K562 (cell line): ENCODE measurements at regions of chr14 and their contacts with region 1.

Region 1: DNA sequence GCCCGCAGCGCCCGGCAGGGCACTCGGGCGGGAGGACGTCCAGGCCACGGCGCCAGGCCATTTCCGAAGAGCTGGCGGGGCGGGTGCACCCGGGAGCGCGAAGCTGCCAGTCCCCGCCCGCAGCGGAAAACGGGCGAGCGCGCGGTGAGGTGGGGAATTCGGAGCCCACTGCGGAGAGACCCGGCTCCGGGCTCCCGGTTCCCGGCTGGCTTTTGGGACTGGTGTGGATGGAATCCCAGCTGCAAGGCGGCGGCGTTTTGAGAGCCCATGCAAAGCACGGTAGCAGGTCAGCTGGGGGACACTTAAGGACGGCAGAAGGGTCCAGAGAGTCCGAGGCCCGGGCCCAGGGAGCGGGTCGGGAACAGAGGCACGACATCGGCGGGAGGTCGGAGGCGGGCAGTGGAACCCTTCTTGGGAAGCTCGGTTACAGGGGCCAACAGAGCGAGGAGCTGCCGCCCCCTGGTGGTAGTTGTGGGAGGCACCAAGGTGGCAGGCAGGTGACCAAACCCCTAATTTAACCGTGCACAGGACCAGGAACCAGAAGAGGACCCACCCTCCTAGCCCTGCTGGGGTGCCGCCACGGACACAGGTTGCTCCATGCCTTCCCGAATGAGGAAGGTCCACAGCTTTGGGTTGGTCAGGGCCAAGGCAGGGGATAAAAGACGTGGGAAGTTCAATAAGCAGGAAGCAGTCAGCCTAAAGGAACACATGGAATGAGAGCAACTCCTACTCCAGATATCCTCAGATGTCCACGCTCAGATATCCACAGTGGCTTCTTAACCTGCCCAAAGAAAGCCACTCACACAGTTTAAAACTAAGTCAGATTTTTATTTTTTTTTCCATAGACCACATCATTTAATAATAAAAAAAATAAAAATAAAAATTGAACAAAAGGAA is 685 bp upstream of the CDH24 start:
- DNase-seq: peak; percentile 78 to 94 (median 84)
- ATAC-seq: peak; percentile 83
- H3K4me3 ChIP-seq: peak overlapping the region; percentile 69
- H3K27ac ChIP-seq: peak overlapping the region; percentile 64
- H3K4me1 ChIP-seq: peaks cover 11 to 45% of the 10 kb centered on the region in 2 experiments
- H3K27me3 ChIP-seq: no peaks in the 10 kb centered on the region
- CTCF ChIP-seq: peak; percentile 92 to 96 (median 94)
- EP300 ChIP-seq: no peak
- POLR2A ChIP-seq: peak; percentile 67
- RAD21 ChIP-seq: peak; percentile 85 to 89

Region 2: DNA sequence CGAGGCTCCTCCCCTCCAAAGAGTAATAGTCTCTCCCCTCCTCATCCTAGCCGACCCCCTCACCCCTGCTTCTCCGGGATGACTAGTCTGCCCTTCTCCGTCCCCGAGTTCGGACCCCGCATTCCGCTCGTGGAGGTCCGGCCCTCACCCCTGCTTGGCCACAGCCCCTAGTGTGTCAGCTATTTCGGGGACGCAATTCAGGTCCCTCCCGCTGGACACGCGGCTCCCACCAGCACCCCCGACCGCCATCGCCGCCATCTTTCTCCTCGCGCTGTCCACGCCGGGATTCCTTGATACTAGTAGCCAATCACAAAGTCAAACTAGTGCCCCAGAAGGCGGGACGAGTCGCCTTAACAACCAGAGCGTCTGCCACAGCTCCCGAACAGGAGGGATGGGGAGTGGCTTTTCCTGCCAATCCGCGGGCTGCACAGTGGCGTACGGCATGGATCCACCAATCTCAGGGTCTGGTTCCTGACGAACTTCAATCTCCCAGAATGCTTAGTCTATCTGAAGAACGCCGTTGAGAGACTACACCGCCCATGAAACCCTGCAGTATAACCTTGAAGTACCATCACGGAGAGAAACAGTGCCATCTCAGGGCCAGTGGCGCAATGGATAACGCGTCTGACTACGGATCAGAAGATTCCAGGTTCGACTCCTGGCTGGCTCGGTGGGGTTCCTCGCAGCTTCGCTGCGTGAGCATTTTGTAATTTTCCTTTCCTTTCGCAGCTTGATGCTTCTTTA is 128.7 kb before region 1 on chr14 and contains the start of gene PRMT5:
- CTCF ChIA-PET with region 1: interaction called, 6 read pairs
- POLR2A ChIA-PET with region 1: interaction called, 6 read pairs
- in situ Hi-C with region 1: no loop called
- intact Hi-C with region 1: loop called (anchors 1 kb)
- DNase-seq: peak; percentile 94 to 99 (median 96)
- ATAC-seq: peak; percentile 96
- H3K4me3 ChIP-seq: peak within 1 kb of the TSS; percentile 80
- H3K27ac ChIP-seq: peak within 1 kb of the TSS; percentile 88
- H3K4me1 ChIP-seq: peaks cover 5 to 14% of the 10 kb centered on the region in 2 experiments; a peak in 3 of 5 replicates
- H3K27me3 ChIP-seq: no peaks in the 10 kb centered on the region
- CTCF ChIP-seq: peak in 1 of 3 experiments; percentile 26; a peak in 2 of 6 replicates
- EP300 ChIP-seq: peak; percentile 77
- POLR2A ChIP-seq: peak; percentile 99
- RAD21 ChIP-seq: no peak
- polyA plus RNA-seq, gene PRMT5: 114 to 155 TPM

Region 3: GRCh38 chr14:22973217-22974032 is 84.6 kb before region 1 on chr14:
- CTCF ChIA-PET with region 1: interaction called, 27 read pairs
- POLR2A ChIA-PET with region 1: interaction called, 5 read pairs
- in situ Hi-C with region 1: loop called (anchors 5 kb)
- intact Hi-C with region 1: loop called (anchors 1 kb)
- DNase-seq: peak; percentile 43 to 75 (median 54)
- ATAC-seq: peak; percentile 77
- H3K4me3 ChIP-seq: no peak overlapping the region
- H3K27ac ChIP-seq: no peak overlapping the region
- H3K4me1 ChIP-seq: peaks cover 19 to 21% of the 10 kb centered on the region in 2 experiments
- H3K27me3 ChIP-seq: no peaks in the 10 kb centered on the region
- CTCF ChIP-seq: peak; percentile 81 to 83 (median 81)
- EP300 ChIP-seq: no peak
- POLR2A ChIP-seq: no peak
- RAD21 ChIP-seq: peak; percentile 69 to 88

Region 4: GRCh38 chr14:22994762-22995275 is 63.2 kb before region 1 on chr14:
- CTCF ChIA-PET with region 1: interaction called, 141 read pairs
- POLR2A ChIA-PET with region 1: interaction called, 9 read pairs
- in situ Hi-C with region 1: no loop called
- intact Hi-C with region 1: loop called (anchors 1 kb)
- DNase-seq: peak; percentile 32 to 74 (median 54)
- ATAC-seq: peak; percentile 94
- H3K4me3 ChIP-seq: no peak overlapping the region
- H3K27ac ChIP-seq: no peak overlapping the region
- H3K4me1 ChIP-seq: peaks cover 7 to 15% of the 10 kb centered on the region in 2 experiments; a peak in 4 of 5 replicates
- H3K27me3 ChIP-seq: no peaks in the 10 kb centered on the region
- CTCF ChIP-seq: peak; percentile 72 to 87 (median 84)
- EP300 ChIP-seq: no peak
- POLR2A ChIP-seq: no peak
- RAD21 ChIP-seq: peak; percentile 73 to 89

Region 5: DNA sequence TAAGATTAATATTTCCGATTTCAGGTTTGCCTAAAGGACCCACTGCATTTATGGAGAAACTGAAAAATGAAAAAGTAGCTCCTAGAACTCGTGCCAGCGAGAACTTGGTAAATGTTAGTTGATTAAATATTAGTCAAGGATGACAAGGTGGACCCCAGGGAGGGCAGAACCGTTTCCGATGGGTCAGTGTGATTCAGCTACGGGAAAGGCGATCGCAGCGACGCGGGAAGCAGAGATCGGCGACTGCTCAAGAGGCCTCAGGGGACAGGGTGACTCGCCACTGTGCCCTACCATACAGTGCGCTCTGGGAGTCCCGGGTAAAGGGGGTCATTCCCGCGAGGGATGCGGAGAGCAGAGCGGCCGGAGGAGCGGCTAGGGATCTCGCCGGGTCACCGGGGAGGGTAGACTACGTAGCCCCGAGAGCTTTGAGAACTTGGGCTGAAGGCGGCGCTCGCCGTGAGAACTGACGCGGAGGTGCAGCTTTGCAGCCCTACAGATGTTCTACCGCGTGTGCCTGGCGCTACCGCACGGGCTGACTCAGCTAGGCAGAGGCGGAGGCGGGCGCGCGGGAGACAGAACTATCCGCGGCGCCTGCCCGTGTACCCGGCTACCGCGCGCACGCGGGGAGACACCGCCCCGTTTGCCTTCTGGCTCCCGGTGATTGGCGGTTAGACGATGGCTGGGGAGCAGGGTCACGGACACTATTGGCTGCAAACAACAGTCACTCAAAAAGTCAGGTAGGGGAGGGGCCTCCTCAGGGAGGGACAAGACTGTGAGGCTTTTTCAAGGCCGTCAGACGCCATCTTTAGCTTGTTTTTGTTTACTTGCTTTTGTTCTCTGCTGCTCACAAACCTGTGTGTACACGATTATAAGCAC is 51.2 kb before region 1 on chr14:
- CTCF ChIA-PET with region 1: interaction called, 3 read pairs
- POLR2A ChIA-PET with region 1: interaction called, 18 read pairs
- in situ Hi-C with region 1: no loop called
- intact Hi-C with region 1: no loop called
- DNase-seq: peak; percentile 97 to 99 (median 99)
- ATAC-seq: peak; percentile 94
- H3K4me3 ChIP-seq: peak overlapping the region; percentile 43
- H3K27ac ChIP-seq: peak overlapping the region; percentile 97
- H3K4me1 ChIP-seq: peaks cover 20 to 34% of the 10 kb centered on the region in 2 experiments
- H3K27me3 ChIP-seq: no peaks in the 10 kb centered on the region
- CTCF ChIP-seq: peak; percentile 38 to 49 (median 45); a peak in 5 of 6 replicates
- EP300 ChIP-seq: 0 out of 2 replicates have a peak, but pooled peaks have one; percentile 4
- POLR2A ChIP-seq: peak; percentile 93
- RAD21 ChIP-seq: peak in 1 of 2 experiments; percentile 35; a peak in 2 of 4 replicates

Region 6: DNA sequence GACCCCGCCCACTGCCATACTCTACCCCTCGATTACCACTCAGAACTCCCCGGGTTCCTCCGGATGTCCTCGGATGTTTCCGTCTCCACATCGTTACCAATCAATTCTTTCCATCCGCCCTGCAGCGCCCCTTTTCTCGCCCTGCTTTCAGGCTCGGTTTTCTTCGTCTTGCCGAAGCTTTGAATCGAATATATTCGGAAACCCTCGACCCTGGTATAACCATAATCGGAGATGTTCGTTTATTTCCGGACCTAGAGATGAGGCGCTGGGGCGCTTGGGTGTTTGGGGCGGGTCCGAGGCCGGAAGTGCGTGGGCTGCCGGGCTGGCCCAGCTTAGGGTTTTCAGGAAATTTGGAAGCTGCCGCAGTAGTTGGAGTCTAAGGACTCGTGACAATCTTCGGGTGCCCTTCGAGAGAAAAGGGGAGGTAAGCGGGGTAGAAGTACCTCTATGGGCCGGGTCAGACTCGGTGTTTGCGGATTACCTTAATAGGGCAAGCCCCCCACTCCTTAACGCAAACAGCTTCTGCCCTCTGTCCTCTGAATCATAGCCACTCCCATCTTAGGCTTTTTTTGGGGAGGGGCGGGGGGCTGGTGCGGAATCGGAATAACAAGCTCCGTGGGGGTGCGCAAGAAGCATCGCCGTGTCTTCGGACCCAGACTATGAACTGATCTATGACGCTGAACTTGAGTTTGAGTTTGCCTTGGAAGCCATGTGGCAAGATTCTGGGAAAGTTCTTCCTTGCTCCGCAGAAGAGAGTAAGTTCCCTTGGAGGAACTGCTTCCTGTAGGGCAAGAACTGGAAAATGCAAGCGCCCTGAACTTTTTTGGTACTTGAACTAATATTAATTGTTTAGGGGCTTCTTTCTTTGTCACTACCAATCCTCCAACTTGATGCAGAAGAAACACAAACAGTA is 37.4 kb after region 1 on chr14 and contains the start of gene C14orf119:
- CTCF ChIA-PET with region 1: no interaction called
- POLR2A ChIA-PET with region 1: interaction called, 11 read pairs
- in situ Hi-C with region 1: no loop called
- intact Hi-C with region 1: no loop called
- DNase-seq: peak; percentile 88 to 99 (median 96)
- ATAC-seq: peak; percentile 91
- H3K4me3 ChIP-seq: peak within 1 kb of the TSS; percentile 83
- H3K27ac ChIP-seq: peak within 1 kb of the TSS; percentile 98
- H3K4me1 ChIP-seq: peaks cover 8 to 29% of the 10 kb centered on the region in 2 experiments; a peak in 4 of 5 replicates
- H3K27me3 ChIP-seq: no peaks in the 10 kb centered on the region
- CTCF ChIP-seq: no peak
- EP300 ChIP-seq: peak; percentile 37; the same call in 1 of the 2 replicates
- POLR2A ChIP-seq: peak; percentile 89
- RAD21 ChIP-seq: no peak
- polyA plus RNA-seq, gene C14orf119: 249 to 251 TPM

Region 7: GRCh38 chr14:23113431-23114119 is 55.6 kb after region 1 on chr14:
- CTCF ChIA-PET with region 1: no interaction called
- POLR2A ChIA-PET with region 1: interaction called, 3 read pairs
- in situ Hi-C with region 1: no loop called
- intact Hi-C with region 1: loop called (anchors 1 kb)
- DNase-seq: peak in 2 of 4 experiments; percentile 42 to 52
- ATAC-seq: no peak
- H3K4me3 ChIP-seq: no peak overlapping the region
- H3K27ac ChIP-seq: no peak overlapping the region
- H3K4me1 ChIP-seq: peaks cover 26 to 48% of the 10 kb centered on the region in 2 experiments
- H3K27me3 ChIP-seq: peaks cover 0 to 13% of the 10 kb centered on the region in 2 experiments; a peak in 3 of 5 replicates
- CTCF ChIP-seq: no peak
- EP300 ChIP-seq: no peak
- POLR2A ChIP-seq: no peak
- RAD21 ChIP-seq: no peak